CD8-positive, alpha-beta T cell (primary cell): ENCODE measurements at regions of chr17 and their contacts with region 1.

Region 1: GRCh38 chr17:63621766-63622519 is at the start of gene MAP3K3:
- DNase-seq: peak; percentile 93 to 99 (median 96)
- ATAC-seq: peak; percentile 90
- H3K4me3 ChIP-seq: peak within 1 kb of the TSS; percentile 78 to 79
- H3K4me3 Mint-ChIP-seq: peak within 1 kb of the TSS; percentile 98
- H3K27ac ChIP-seq: peak within 1 kb of the TSS; percentile 58 to 81
- H3K27ac Mint-ChIP-seq: peak within 1 kb of the TSS; percentile 93
- H3K4me1 ChIP-seq: peaks cover 30% of the 10 kb centered on the region
- H3K4me1 Mint-ChIP-seq: peaks cover 39% of the 10 kb centered on the region
- H3K27me3 ChIP-seq: no peaks in the 10 kb centered on the region
- H3K27me3 Mint-ChIP-seq: no peaks in the 10 kb centered on the region
- CTCF ChIP-seq: no peak
- total RNA-seq, gene MAP3K3: 72.9 to 74.5 TPM

Region 2: GRCh38 chr17:63519972-63520882 is 101.7 kb before region 1 on chr17:
- CTCF ChIA-PET with region 1: no interaction called
- POLR2A ChIA-PET with region 1: no interaction called
- intact Hi-C with region 1: no loop called
- DNase-seq: no peak
- ATAC-seq: no peak
- H3K4me3 ChIP-seq: no peak overlapping the region
- H3K4me3 Mint-ChIP-seq: no peak overlapping the region
- H3K27ac ChIP-seq: no peak overlapping the region
- H3K27ac Mint-ChIP-seq: no peak overlapping the region
- H3K4me1 ChIP-seq: peaks cover 4% of the 10 kb centered on the region
- H3K4me1 Mint-ChIP-seq: peaks cover 5% of the 10 kb centered on the region
- H3K27me3 ChIP-seq: peaks cover 0 to 5% of the 10 kb centered on the region in 2 experiments
- H3K27me3 Mint-ChIP-seq: peaks cover 21% of the 10 kb centered on the region
- CTCF ChIP-seq: no peak

Region 3: GRCh38 chr17:63549946-63550807 is 71.8 kb before region 1 on chr17 and contains the start of gene DCAF7:
- CTCF ChIA-PET with region 1: no interaction called
- POLR2A ChIA-PET with region 1: interaction called, 11 read pairs
- intact Hi-C with region 1: loop called (anchors 1 kb)
- DNase-seq: peak; percentile 99 to 100 (median 99)
- ATAC-seq: peak; percentile 94
- H3K4me3 ChIP-seq: peak within 1 kb of the TSS; percentile 99 to 100
- H3K4me3 Mint-ChIP-seq: peak within 1 kb of the TSS; percentile 98
- H3K27ac ChIP-seq: peak within 1 kb of the TSS; percentile 86 to 97
- H3K27ac Mint-ChIP-seq: peak within 1 kb of the TSS; percentile 98
- H3K4me1 ChIP-seq: peaks cover 39% of the 10 kb centered on the region
- H3K4me1 Mint-ChIP-seq: peaks cover 45% of the 10 kb centered on the region
- H3K27me3 ChIP-seq: no peaks in the 10 kb centered on the region
- H3K27me3 Mint-ChIP-seq: no peaks in the 10 kb centered on the region
- CTCF ChIP-seq: no peak
- total RNA-seq, gene DCAF7: 10.7 to 11.7 TPM

Region 4: GRCh38 chr17:63611354-63611753 is 10.6 kb before region 1 on chr17:
- CTCF ChIA-PET with region 1: interaction called, 28 read pairs
- POLR2A ChIA-PET with region 1: interaction called, 8 read pairs
- intact Hi-C with region 1: loop called in 1 of 2 experiments (anchors 1 kb)
- DNase-seq: peak in 1 of 9 experiments; percentile 37
- ATAC-seq: peak; percentile 13
- H3K4me3 ChIP-seq: no peak overlapping the region
- H3K4me3 Mint-ChIP-seq: no peak overlapping the region
- H3K27ac ChIP-seq: peak overlapping the region in 1 of 2 experiments; percentile 39
- H3K27ac Mint-ChIP-seq: peak overlapping the region; percentile 91
- H3K4me1 ChIP-seq: peaks cover 28% of the 10 kb centered on the region
- H3K4me1 Mint-ChIP-seq: peaks cover 31% of the 10 kb centered on the region
- H3K27me3 ChIP-seq: no peaks in the 10 kb centered on the region
- H3K27me3 Mint-ChIP-seq: no peaks in the 10 kb centered on the region
- CTCF ChIP-seq: no peak

Region 5: DNA sequence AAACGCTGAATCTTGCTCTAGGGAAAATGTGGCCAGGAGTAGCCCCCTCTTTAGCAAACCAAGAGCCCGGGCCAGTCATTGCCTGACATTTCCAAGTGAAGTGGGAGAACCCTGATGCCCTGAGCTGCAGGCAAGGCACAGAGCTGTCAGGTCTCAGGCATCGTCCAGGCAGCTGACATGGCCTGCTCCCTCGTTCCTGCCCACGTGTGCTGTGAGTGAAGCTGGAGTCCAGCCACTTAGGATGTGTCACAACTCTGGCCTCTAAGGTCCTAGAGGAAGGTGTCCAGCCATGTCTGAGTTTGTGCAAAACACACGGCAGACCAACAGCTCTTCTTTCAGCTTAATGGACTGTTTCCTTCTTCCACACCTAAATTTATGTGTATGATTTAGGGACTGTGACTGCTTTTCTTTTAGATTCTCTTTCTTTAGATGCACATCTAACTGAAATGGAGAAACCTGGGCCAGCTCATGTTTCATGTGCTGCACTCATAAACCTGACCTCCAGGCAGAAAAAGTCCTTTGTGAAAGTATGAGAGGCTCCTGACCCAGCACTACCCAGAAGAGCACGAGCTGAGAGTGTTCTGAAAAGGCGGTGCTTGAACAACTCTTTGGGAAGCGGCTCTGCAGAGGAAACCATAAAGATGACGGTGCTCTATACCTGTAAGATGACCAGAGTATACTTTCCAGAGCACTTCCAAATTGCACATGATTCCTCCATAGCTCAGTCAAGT is 92.8 kb after region 1 on chr17:
- CTCF ChIA-PET with region 1: interaction called, 11 read pairs
- POLR2A ChIA-PET with region 1: interaction called, 15 read pairs
- intact Hi-C with region 1: loop called (anchors 1 to 5 kb)
- DNase-seq: no peak
- ATAC-seq: no peak
- H3K4me3 ChIP-seq: no peak overlapping the region
- H3K4me3 Mint-ChIP-seq: no peak overlapping the region
- H3K27ac ChIP-seq: no peak overlapping the region
- H3K27ac Mint-ChIP-seq: no peak overlapping the region
- H3K4me1 ChIP-seq: peaks cover 12% of the 10 kb centered on the region
- H3K4me1 Mint-ChIP-seq: peaks cover 15% of the 10 kb centered on the region
- H3K27me3 ChIP-seq: no peaks in the 10 kb centered on the region
- H3K27me3 Mint-ChIP-seq: no peaks in the 10 kb centered on the region
- CTCF ChIP-seq: no peak

Region 6: GRCh38 chr17:63773381-63774140 is 151.6 kb after region 1 on chr17 and contains the start of gene CCDC47:
- CTCF ChIA-PET with region 1: no interaction called
- POLR2A ChIA-PET with region 1: interaction called, 6 read pairs
- intact Hi-C with region 1: loop called (anchors 1 to 5 kb)
- DNase-seq: peak; percentile 95 to 100 (median 97)
- ATAC-seq: peak; percentile 79
- H3K4me3 ChIP-seq: peak within 1 kb of the TSS; percentile 84 to 95
- H3K4me3 Mint-ChIP-seq: peak within 1 kb of the TSS; percentile 97
- H3K27ac ChIP-seq: peak within 1 kb of the TSS; percentile 86 to 97
- H3K27ac Mint-ChIP-seq: peak within 1 kb of the TSS; percentile 98
- H3K4me1 ChIP-seq: peaks cover 41% of the 10 kb centered on the region
- H3K4me1 Mint-ChIP-seq: peaks cover 60% of the 10 kb centered on the region
- H3K27me3 ChIP-seq: no peaks in the 10 kb centered on the region
- H3K27me3 Mint-ChIP-seq: no peaks in the 10 kb centered on the region
- CTCF ChIP-seq: no peak
- total RNA-seq, gene CCDC47: 33.1 to 34.6 TPM

Region 7: DNA sequence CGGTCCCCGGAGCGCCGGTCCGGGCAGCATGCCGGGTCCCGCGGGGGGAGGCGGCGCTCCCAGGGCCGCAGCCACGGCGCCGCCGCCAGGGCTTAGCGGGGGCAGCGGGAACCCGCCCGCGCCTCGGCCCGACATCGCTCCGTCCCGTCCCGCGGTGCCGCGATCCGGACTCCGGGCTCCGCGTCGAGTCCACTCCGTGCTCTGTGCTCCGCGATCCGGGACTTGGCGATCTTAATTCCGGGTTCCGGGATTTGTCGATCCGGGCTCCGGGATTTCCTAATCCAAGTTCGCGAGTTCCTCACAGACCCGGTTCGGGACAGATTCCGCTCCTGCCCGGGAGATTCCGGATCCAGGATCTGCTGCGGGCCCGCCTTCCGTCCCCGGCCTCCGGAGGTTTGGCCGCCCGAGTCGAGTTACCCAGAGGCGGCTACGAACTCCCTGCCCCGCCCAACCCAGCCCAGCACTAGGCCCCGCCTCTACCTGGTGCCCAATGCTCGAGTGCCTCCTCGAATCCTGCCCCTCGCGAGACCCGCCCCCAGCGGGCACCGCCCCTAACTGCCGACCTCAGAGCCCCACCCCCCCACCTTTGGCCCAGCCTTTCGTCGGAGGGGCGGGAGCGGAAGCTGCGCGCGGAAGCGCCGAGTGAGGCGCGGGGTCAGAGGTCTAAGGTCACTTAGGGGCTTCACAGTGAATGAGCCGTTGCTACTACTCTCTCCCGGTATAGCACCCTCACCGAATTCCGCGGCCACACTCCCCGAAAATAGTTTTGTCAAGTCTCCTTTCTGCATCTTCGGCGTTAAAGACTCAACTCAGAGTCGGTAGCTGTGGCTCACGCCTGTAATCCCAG is 220.8 kb after region 1 on chr17 and contains the start of gene SMARCD2:
- CTCF ChIA-PET with region 1: no interaction called
- POLR2A ChIA-PET with region 1: interaction called, 4 read pairs
- intact Hi-C with region 1: loop called (anchors 1 to 5 kb)
- DNase-seq: peak; percentile 99
- ATAC-seq: peak; percentile 91
- H3K4me3 ChIP-seq: peak within 1 kb of the TSS; percentile 86 to 95
- H3K4me3 Mint-ChIP-seq: peak within 1 kb of the TSS; percentile 92
- H3K27ac ChIP-seq: peak within 1 kb of the TSS; percentile 88 to 95
- H3K27ac Mint-ChIP-seq: peak within 1 kb of the TSS; percentile 92
- H3K4me1 ChIP-seq: peaks cover 43% of the 10 kb centered on the region
- H3K4me1 Mint-ChIP-seq: peaks cover 30% of the 10 kb centered on the region
- H3K27me3 ChIP-seq: no peaks in the 10 kb centered on the region
- H3K27me3 Mint-ChIP-seq: no peaks in the 10 kb centered on the region
- CTCF ChIP-seq: no peak
- total RNA-seq, gene SMARCD2: 121 TPM